ENCODE measurements at regions of chr3 and their contacts with region 1.

Region 1: GRCh38 chr3:114223143-114223542 is 14.2 kb downstream of the ZNF80 start:
- DNase-seq: peak; percentile 57
- ATAC-seq: peak; percentile 68
- H3K4me3 Mint-ChIP-seq: peak overlapping the region; percentile 4
- H3K27ac Mint-ChIP-seq: peak overlapping the region; percentile 99
- H3K4me1 Mint-ChIP-seq: peaks cover 88% of the 10 kb centered on the region
- H3K27me3 Mint-ChIP-seq: no peaks in the 10 kb centered on the region
- CTCF ChIP-seq: no peak

Region 2: GRCh38 chr3:114205541-114205940 is 17.6 kb before region 1 on chr3:
- CTCF ChIA-PET with region 1: no interaction called
- POLR2A ChIA-PET with region 1: no interaction called
- intact Hi-C with region 1: no loop called
- DNase-seq: no peak
- ATAC-seq: no peak
- H3K4me3 Mint-ChIP-seq: no peak overlapping the region
- H3K27ac Mint-ChIP-seq: no peak overlapping the region
- H3K4me1 Mint-ChIP-seq: peaks cover 18% of the 10 kb centered on the region
- H3K27me3 Mint-ChIP-seq: no peaks in the 10 kb centered on the region
- CTCF ChIP-seq: no peak

Region 3: GRCh38 chr3:114242947-114243346 is 19.8 kb after region 1 on chr3:
- CTCF ChIA-PET with region 1: no interaction called
- POLR2A ChIA-PET with region 1: interaction called, 4 read pairs
- intact Hi-C with region 1: loop called (anchors 2 kb)
- DNase-seq: peak; percentile 58
- ATAC-seq: peak; percentile 77
- H3K4me3 Mint-ChIP-seq: no peak overlapping the region
- H3K27ac Mint-ChIP-seq: peak overlapping the region; percentile 29
- H3K4me1 Mint-ChIP-seq: peaks cover 23% of the 10 kb centered on the region
- H3K27me3 Mint-ChIP-seq: no peaks in the 10 kb centered on the region
- CTCF ChIP-seq: no peak

Region 4: GRCh38 chr3:114336122-114336697 is 113.1 kb after region 1 on chr3:
- CTCF ChIA-PET with region 1: no interaction called
- POLR2A ChIA-PET with region 1: no interaction called
- intact Hi-C with region 1: loop called (anchors 5 kb)
- DNase-seq: no peak
- ATAC-seq: no peak
- H3K4me3 Mint-ChIP-seq: no peak overlapping the region
- H3K27ac Mint-ChIP-seq: peak overlapping the region; percentile 97
- H3K4me1 Mint-ChIP-seq: peaks cover 59% of the 10 kb centered on the region
- H3K27me3 Mint-ChIP-seq: no peaks in the 10 kb centered on the region
- CTCF ChIP-seq: peak; percentile 66